Tibial artery (tissue), 4 donors: ENCODE measurements at regions of chr19 and their contacts with region 1.

Region 1: GRCh38 chr19:15629003-15629880 is 11.5 kb upstream of the CYP4F3 start:
- DNase-seq: peak; percentile 65 to 79
- H3K4me3 ChIP-seq: no peak overlapping the region
- H3K27ac ChIP-seq: no peak overlapping the region
- H3K4me1 ChIP-seq: no peaks in the 10 kb centered on the region
- H3K27me3 ChIP-seq: peaks cover 0 to 24% of the 10 kb centered on the region in 2 donors
- CTCF ChIP-seq: peak; percentile 90 to 93

Region 2: GRCh38 chr19:15374796-15375440 is 254.3 kb before region 1 on chr19:
- intact Hi-C with region 1: no loop called
- DNase-seq: peak; percentile 70 to 90
- H3K4me3 ChIP-seq: peak overlapping the region in 1 of 2 donors; percentile 13
- H3K27ac ChIP-seq: peak overlapping the region; percentile 97
- H3K4me1 ChIP-seq: peaks cover 0 to 56% (median 52%) of the 10 kb centered on the region in 4 donors
- H3K27me3 ChIP-seq: no peaks in the 10 kb centered on the region
- CTCF ChIP-seq: no peak

Region 3: DNA sequence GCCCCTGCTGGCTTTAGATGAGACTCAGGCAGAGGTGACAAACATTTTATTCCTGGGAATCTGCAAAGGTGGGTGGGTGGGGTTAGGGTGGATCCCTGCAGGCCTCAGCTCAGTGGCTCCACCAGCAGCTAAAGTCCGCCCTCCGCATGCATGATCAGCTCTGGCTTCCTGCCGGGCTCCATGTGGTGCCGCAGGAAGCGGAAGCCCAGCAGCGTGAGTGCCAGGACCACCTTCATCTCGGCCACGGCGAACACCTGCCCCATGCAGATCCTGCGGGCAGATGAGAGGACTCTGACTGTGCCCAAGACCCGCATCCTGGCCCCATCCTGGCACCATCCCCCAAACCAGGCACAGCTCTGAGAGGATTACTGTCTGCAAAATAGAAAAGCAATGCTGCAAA is 242.3 kb after region 1 on chr19:
- intact Hi-C with region 1: loop called (anchors 10 kb)
- DNase-seq: no peak
- H3K4me3 ChIP-seq: no peak overlapping the region
- H3K27ac ChIP-seq: no peak overlapping the region
- H3K4me1 ChIP-seq: no peaks in the 10 kb centered on the region
- H3K27me3 ChIP-seq: peaks cover 0 to 36% of the 10 kb centered on the region in 2 donors
- CTCF ChIP-seq: no peak

Region 4: GRCh38 chr19:16025108-16026101 is 396.2 kb after region 1 on chr19:
- intact Hi-C with region 1: loop called (anchors 10 kb)
- DNase-seq: peak in 1 of 2 donors; percentile 64
- H3K4me3 ChIP-seq: no peak overlapping the region
- H3K27ac ChIP-seq: no peak overlapping the region
- H3K4me1 ChIP-seq: no peaks in the 10 kb centered on the region
- H3K27me3 ChIP-seq: peaks cover 0 to 34% of the 10 kb centered on the region in 2 donors
- CTCF ChIP-seq: peak; percentile 36 to 43